Naive thymus-derived CD4-positive, alpha-beta T cell (primary cell): ENCODE measurements at regions of chr17 and their contacts with region 1.

Region 1: GRCh38 chr17:45135192-45135977 is at the start of gene ACBD4:
- DNase-seq: peak; percentile 95 to 100 (median 98)
- ATAC-seq: peak; percentile 93
- H3K4me3 ChIP-seq: peak within 1 kb of the TSS; percentile 94
- H3K4me3 Mint-ChIP-seq: peak within 1 kb of the TSS; percentile 87 to 95 (median 90)
- H3K27ac ChIP-seq: peak within 1 kb of the TSS; percentile 76
- H3K27ac Mint-ChIP-seq: peak within 1 kb of the TSS; percentile 75 to 92 (median 82)
- H3K4me1 ChIP-seq: peaks cover 12% of the 10 kb centered on the region in 2 donors
- H3K4me1 Mint-ChIP-seq: peaks cover 9 to 25% (median 21%) of the 10 kb centered on the region in 7 donors
- H3K27me3 ChIP-seq: no peaks in the 10 kb centered on the region
- H3K27me3 Mint-ChIP-seq: peaks cover 0 to 8% (median 0%) of the 10 kb centered on the region in 5 donors
- total RNA-seq, gene ACBD4: 17.9 to 59.5 (median 31.3) TPM

Region 2: DNA sequence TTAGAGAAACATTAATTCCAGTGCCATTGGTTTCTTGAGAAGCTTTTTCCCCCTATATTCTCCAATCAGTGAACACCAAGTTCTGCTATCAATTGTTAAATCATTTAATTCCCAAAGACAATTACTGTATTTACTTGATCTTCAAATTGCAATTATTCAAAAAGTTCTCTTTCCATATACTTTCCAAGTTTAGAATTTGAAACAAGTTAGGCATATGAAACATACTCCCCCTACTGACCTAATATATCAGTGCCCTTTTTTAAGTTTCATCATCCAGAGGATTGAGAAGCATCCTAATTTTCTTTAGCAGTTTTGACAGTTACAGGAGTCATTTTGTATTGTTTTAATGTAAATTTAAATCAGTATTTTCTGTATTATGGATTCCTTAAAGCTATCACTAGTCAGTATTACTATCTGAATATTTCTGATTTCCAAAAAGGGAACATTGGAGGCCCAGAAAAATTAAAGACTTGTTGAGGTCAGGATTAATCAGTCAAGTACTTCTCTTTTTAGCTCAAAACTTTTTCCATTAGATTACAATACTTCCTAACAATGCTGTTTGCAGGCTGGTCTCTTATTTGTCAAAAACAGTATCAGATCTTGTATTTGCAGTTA is 462.8 kb before region 1 on chr17:
- CTCF ChIA-PET with region 1: no interaction called
- POLR2A ChIA-PET with region 1: no interaction called
- intact Hi-C with region 1: no loop called
- DNase-seq: no peak
- ATAC-seq: no peak
- H3K4me3 ChIP-seq: no peak overlapping the region
- H3K4me3 Mint-ChIP-seq: no peak overlapping the region
- H3K27ac ChIP-seq: no peak overlapping the region
- H3K27ac Mint-ChIP-seq: no peak overlapping the region
- H3K4me1 ChIP-seq: no peaks in the 10 kb centered on the region
- H3K4me1 Mint-ChIP-seq: no peaks in the 10 kb centered on the region
- H3K27me3 ChIP-seq: no peaks in the 10 kb centered on the region
- H3K27me3 Mint-ChIP-seq: peaks cover 0 to 3% (median 0%) of the 10 kb centered on the region in 5 donors

Region 3: DNA sequence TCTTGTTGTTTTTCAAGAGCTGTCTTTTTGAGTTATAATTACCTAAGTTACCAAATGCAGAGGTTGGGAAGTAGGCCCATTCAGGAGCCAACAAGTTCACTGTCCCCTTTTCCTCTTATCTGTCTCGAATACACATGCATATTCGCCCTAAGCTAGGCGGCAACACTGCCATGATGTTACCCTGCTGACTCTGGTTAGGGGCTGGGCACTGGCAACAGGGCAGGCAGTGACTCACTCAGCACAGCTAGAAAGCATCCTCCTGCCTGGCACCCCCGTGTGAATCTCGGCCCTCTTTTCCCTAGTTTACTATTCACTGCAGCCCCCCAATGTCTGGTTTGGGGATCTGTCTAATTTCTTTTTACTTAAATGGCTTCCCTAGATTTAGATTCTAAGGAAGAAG is 413.1 kb before region 1 on chr17:
- CTCF ChIA-PET with region 1: no interaction called
- POLR2A ChIA-PET with region 1: no interaction called
- intact Hi-C with region 1: no loop called
- DNase-seq: no peak
- ATAC-seq: no peak
- H3K4me3 ChIP-seq: no peak overlapping the region
- H3K4me3 Mint-ChIP-seq: no peak overlapping the region
- H3K27ac ChIP-seq: no peak overlapping the region
- H3K27ac Mint-ChIP-seq: no peak overlapping the region
- H3K4me1 ChIP-seq: no peaks in the 10 kb centered on the region
- H3K4me1 Mint-ChIP-seq: no peaks in the 10 kb centered on the region
- H3K27me3 ChIP-seq: no peaks in the 10 kb centered on the region
- H3K27me3 Mint-ChIP-seq: no peaks in the 10 kb centered on the region

Region 4: DNA sequence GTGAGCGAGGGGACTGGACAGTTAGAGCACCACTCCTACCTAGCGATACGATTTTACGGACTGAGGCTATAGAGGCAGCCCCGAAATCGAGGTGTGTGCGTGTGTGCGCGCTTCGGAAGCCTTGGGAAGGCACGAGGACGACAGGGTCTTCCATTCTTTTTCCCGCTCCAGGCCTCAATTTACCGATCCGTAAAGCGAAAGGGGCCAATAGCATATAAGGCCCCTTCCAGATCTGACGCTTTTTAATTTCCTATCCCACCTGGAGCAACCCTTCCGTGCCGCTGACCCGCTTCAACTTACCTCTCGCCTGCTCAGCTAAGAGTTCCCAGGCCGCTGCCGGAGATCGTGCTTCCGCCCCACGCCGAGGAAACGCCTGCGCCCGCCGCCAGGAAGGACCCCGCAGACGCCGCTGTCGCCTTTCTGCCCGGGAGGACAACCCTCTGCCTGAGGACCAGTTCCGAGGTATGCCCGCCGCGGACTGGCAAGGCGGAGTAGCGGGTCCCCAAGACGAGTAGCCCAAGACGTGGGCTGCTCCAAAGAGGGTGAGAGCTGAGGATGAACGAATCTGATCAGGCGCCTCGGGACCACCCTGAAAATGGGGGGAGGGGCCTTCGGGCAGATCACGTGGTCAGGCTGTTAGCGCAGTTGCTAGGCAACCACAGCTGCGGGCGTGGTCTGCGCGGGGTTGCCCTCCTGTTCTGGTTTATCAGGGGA is 236.2 kb before region 1 on chr17 and contains the start of gene EFTUD2:
- CTCF ChIA-PET with region 1: no interaction called
- POLR2A ChIA-PET with region 1: no interaction called
- intact Hi-C with region 1: loop called in 1 of 2 experiments (anchors 1 kb)
- DNase-seq: peak; percentile 91 to 99 (median 96)
- ATAC-seq: peak; percentile 94
- H3K4me3 ChIP-seq: peak within 1 kb of the TSS; percentile 89
- H3K4me3 Mint-ChIP-seq: peak within 1 kb of the TSS; percentile 84 to 97 (median 96)
- H3K27ac ChIP-seq: peak within 1 kb of the TSS; percentile 96
- H3K27ac Mint-ChIP-seq: peak within 1 kb of the TSS; percentile 99 to 100 (median 99)
- H3K4me1 ChIP-seq: peaks cover 6 to 10% of the 10 kb centered on the region in 2 donors
- H3K4me1 Mint-ChIP-seq: peaks cover 26 to 41% (median 35%) of the 10 kb centered on the region in 7 donors
- H3K27me3 ChIP-seq: no peaks in the 10 kb centered on the region
- H3K27me3 Mint-ChIP-seq: peaks cover 0 to 23% (median 0%) of the 10 kb centered on the region in 5 donors
- total RNA-seq, gene EFTUD2: 94.3 to 157 (median 120) TPM

Region 5: GRCh38 chr17:45098869-45099616 is 36.3 kb before region 1 on chr17:
- CTCF ChIA-PET with region 1: interaction called, 3 read pairs
- POLR2A ChIA-PET with region 1: no interaction called
- intact Hi-C with region 1: loop called in 1 of 2 experiments (anchors 1 kb)
- DNase-seq: peak; percentile 38 to 77 (median 66)
- ATAC-seq: peak; percentile 89
- H3K4me3 ChIP-seq: no peak overlapping the region
- H3K4me3 Mint-ChIP-seq: no peak overlapping the region
- H3K27ac ChIP-seq: no peak overlapping the region
- H3K27ac Mint-ChIP-seq: peak overlapping the region in 6 of 9 donors; percentile 4 to 87 (median 62)
- H3K4me1 ChIP-seq: no peaks in the 10 kb centered on the region
- H3K4me1 Mint-ChIP-seq: peaks cover 0 to 6% (median 0%) of the 10 kb centered on the region in 7 donors
- H3K27me3 ChIP-seq: no peaks in the 10 kb centered on the region
- H3K27me3 Mint-ChIP-seq: no peaks in the 10 kb centered on the region

Region 6: GRCh38 chr17:45161019-45161825 is 25.8 kb after region 1 on chr17:
- CTCF ChIA-PET with region 1: interaction called, 32 read pairs
- POLR2A ChIA-PET with region 1: interaction called, 22 read pairs
- intact Hi-C with region 1: loop called in 1 of 2 experiments (anchors 1 kb)
- DNase-seq: peak; percentile 89 to 100 (median 99)
- ATAC-seq: peak; percentile 93
- H3K4me3 ChIP-seq: peak overlapping the region; percentile 95
- H3K4me3 Mint-ChIP-seq: peak overlapping the region; percentile 88 to 100 (median 96)
- H3K27ac ChIP-seq: peak overlapping the region; percentile 98
- H3K27ac Mint-ChIP-seq: peak overlapping the region; percentile 97 to 100 (median 98)
- H3K4me1 ChIP-seq: peaks cover 15 to 27% of the 10 kb centered on the region in 2 donors
- H3K4me1 Mint-ChIP-seq: peaks cover 29 to 48% (median 43%) of the 10 kb centered on the region in 7 donors
- H3K27me3 ChIP-seq: no peaks in the 10 kb centered on the region
- H3K27me3 Mint-ChIP-seq: no peaks in the 10 kb centered on the region

Region 7: DNA sequence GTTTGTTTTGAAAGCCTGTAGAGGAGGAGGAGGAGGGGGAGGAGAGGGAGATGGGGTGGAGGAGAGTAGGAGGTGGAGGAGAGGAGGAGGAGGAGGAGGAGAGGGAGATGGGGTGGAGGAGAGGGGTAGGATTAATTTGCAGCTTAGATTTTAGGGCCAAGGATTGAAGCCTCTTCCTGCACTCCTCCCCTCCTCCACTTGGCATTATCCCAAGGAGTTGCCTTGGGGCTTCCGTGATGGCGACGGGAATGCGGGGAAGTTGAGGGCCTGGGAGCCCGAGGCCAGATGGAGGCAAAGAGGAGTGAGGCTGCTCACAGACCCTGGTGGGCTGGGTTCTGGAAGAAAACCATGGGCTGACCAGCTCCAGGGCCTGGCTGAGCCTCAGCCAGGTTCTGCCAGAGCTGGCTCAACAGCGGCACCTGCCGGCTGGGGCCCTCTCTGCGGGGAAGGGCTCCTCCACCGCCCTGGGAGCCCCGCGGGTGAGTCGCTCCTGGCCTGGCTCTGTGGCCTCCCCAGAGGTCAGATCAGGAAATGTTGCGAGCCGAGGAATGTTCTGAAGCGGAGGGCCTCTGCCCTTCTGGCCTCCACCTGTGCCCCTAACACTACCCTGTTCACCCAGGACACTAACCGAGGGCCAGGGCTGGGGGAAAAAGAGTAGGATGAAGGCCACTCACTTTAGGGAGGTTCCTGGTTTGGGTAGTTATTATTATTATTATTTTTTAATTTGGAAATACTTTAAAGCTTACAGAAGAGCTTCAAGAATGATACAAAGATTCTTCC is 62.4 kb after region 1 on chr17:
- CTCF ChIA-PET with region 1: interaction called, 82 read pairs
- POLR2A ChIA-PET with region 1: interaction called, 20 read pairs
- intact Hi-C with region 1: loop called (anchors 1 kb)
- DNase-seq: peak; percentile 62 to 94 (median 79)
- ATAC-seq: peak; percentile 99
- H3K4me3 ChIP-seq: no peak overlapping the region
- H3K4me3 Mint-ChIP-seq: no peak overlapping the region
- H3K27ac ChIP-seq: no peak overlapping the region
- H3K27ac Mint-ChIP-seq: no peak overlapping the region
- H3K4me1 ChIP-seq: peaks cover 0 to 5% of the 10 kb centered on the region in 2 donors
- H3K4me1 Mint-ChIP-seq: peaks cover 0 to 9% (median 3%) of the 10 kb centered on the region in 7 donors
- H3K27me3 ChIP-seq: no peaks in the 10 kb centered on the region
- H3K27me3 Mint-ChIP-seq: no peaks in the 10 kb centered on the region

Region 8: GRCh38 chr17:45228763-45229539 is 93.6 kb after region 1 on chr17:
- CTCF ChIA-PET with region 1: interaction called, 12 read pairs
- POLR2A ChIA-PET with region 1: interaction called, 6 read pairs
- intact Hi-C with region 1: no loop called
- DNase-seq: peak; percentile 64 to 92 (median 74)
- ATAC-seq: peak; percentile 66
- H3K4me3 ChIP-seq: peak overlapping the region; percentile 91
- H3K4me3 Mint-ChIP-seq: peak overlapping the region; percentile 83 to 99 (median 96)
- H3K27ac ChIP-seq: peak overlapping the region; percentile 96
- H3K27ac Mint-ChIP-seq: peak overlapping the region; percentile 96 to 100 (median 99)
- H3K4me1 ChIP-seq: peaks cover 62 to 77% of the 10 kb centered on the region in 2 donors
- H3K4me1 Mint-ChIP-seq: peaks cover 54 to 91% (median 77%) of the 10 kb centered on the region in 7 donors
- H3K27me3 ChIP-seq: no peaks in the 10 kb centered on the region
- H3K27me3 Mint-ChIP-seq: no peaks in the 10 kb centered on the region

Region 9: GRCh38 chr17:45261577-45262515 is 126.5 kb after region 1 on chr17 and contains the start of gene SPATA32:
- CTCF ChIA-PET with region 1: no interaction called
- POLR2A ChIA-PET with region 1: no interaction called
- intact Hi-C with region 1: no loop called
- DNase-seq: peak; percentile 45 to 69 (median 66)
- ATAC-seq: peak; percentile 83
- H3K4me3 ChIP-seq: peak within 1 kb of the TSS; percentile 52
- H3K4me3 Mint-ChIP-seq: peak within 1 kb of the TSS; percentile 77 to 89 (median 84)
- H3K27ac ChIP-seq: peak within 1 kb of the TSS; percentile 85
- H3K27ac Mint-ChIP-seq: peak within 1 kb of the TSS; percentile 58 to 93 (median 86)
- H3K4me1 ChIP-seq: peaks cover 10 to 31% of the 10 kb centered on the region in 2 donors
- H3K4me1 Mint-ChIP-seq: peaks cover 22 to 55% (median 45%) of the 10 kb centered on the region in 7 donors
- H3K27me3 ChIP-seq: no peaks in the 10 kb centered on the region
- H3K27me3 Mint-ChIP-seq: no peaks in the 10 kb centered on the region
- total RNA-seq, gene SPATA32: 0.12 to 1.1 (median 0.58) TPM in 4 of 5 experiments, not detected in the other